Mammary epithelial cell (primary cell): ENCODE measurements at regions of chr13 and their contacts with region 1.

Region 1: DNA sequence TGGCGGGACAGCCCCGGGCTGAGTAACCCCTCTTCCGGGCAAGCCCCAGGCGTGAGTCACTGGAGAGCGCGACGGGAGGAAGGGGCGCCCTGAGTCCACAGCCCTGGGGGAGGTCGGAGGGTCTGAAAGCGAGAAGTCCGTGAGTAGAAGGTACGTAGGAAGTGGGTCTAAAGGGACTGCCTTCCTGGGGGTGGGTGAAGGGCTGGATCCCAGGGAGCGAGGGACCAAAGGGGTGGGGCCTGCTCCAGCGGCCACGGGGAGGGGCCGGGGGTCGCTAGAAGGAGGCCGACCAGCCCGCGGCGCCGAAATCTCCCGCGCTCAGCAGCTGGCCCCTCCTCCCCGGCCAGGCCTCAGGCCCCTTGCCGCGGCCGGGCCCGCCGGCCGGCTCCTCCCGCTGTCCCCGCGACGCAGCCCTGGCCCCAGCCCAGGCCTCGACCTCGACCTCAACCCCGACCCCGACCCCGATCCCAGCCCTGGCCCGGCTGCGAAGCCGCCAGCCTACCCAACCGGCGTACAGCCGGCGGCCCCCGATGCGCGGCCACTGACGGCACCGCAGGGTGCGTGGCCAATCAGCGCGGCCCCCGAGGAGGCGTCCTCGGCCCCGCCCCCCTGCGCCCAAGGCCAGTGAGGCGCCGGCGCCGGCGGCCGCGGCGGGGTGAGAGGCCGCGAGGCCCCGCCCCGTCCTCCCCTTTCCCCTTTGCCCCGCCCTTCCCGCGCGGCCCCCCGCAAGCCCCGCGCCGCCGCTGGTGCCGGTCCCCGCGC is 22.6 kb downstream of the IPO5 start:
- DNase-seq: peak; percentile 83
- H3K4me3 ChIP-seq: peak overlapping the region; percentile 70 to 98 (median 88)
- H3K27ac ChIP-seq: peak overlapping the region; percentile 80
- H3K4me1 ChIP-seq: peaks cover 13% of the 10 kb centered on the region
- H3K27me3 ChIP-seq: no peaks in the 10 kb centered on the region
- CTCF ChIP-seq: no peak

Region 2: GRCh38 chr13:97911311-97912128 is 64.5 kb before region 1 on chr13:
- CTCF ChIA-PET with region 1: no interaction called
- dilution Hi-C with region 1: no loop called
- in situ Hi-C with region 1: no loop called
- intact Hi-C with region 1: loop called (anchors 5 kb)
- DNase-seq: peak; percentile 29
- H3K4me3 ChIP-seq: no peak overlapping the region
- H3K27ac ChIP-seq: no peak overlapping the region
- H3K4me1 ChIP-seq: no peaks in the 10 kb centered on the region
- H3K27me3 ChIP-seq: no peaks in the 10 kb centered on the region
- CTCF ChIP-seq: peak; percentile 44 to 58

Region 3: GRCh38 chr13:97948041-97948440 is 28.0 kb before region 1 on chr13:
- CTCF ChIA-PET with region 1: no interaction called
- dilution Hi-C with region 1: no loop called
- in situ Hi-C with region 1: no loop called
- intact Hi-C with region 1: loop called (anchors 2 kb)
- DNase-seq: peak; percentile 52
- H3K4me3 ChIP-seq: no peak overlapping the region
- H3K27ac ChIP-seq: no peak overlapping the region
- H3K4me1 ChIP-seq: peaks cover 16% of the 10 kb centered on the region
- H3K27me3 ChIP-seq: no peaks in the 10 kb centered on the region
- CTCF ChIP-seq: no peak

Region 4: DNA sequence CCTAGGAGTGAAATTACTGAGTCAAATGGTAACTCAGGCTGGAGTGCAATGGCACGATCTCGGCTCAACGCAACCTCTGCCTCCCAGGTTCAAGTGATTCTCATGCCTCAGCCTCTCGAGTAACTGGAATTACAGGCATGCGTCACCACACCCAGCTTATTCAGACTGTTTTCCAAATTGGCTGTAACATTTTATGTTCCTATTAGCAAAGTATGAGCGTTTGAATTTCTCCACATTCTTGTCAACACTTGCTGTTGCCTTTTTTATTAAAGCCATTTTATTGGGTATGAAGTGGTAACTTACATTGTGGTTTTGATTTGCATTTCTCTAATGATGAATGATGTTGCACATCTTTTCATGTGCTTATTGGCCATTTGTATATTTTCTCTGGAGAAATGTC is 14.7 kb before region 1 on chr13:
- CTCF ChIA-PET with region 1: no interaction called
- dilution Hi-C with region 1: no loop called
- in situ Hi-C with region 1: no loop called
- intact Hi-C with region 1: no loop called
- DNase-seq: no peak
- H3K4me3 ChIP-seq: no peak overlapping the region
- H3K27ac ChIP-seq: no peak overlapping the region
- H3K4me1 ChIP-seq: no peaks in the 10 kb centered on the region
- H3K27me3 ChIP-seq: no peaks in the 10 kb centered on the region
- CTCF ChIP-seq: no peak

Region 5: DNA sequence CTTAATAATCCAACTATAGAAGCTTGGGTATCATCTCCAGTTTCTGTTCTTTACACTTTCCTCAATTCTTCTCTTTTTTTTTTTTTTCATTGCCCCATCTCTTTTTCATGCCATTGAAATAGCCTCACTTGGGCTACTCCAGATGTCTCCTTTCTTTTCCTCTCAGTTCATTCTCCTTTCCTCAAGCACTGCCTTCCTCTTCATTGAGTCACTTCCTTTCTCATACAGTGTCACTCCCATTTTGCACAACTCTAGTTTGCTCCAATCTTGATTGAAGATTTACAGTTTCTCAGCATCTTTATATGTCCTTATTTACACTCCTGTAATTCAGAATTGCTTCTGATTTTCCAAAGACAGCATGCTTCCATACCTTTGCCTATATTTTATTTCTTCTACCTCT is 38.7 kb after region 1 on chr13:
- CTCF ChIA-PET with region 1: no interaction called
- dilution Hi-C with region 1: no loop called
- in situ Hi-C with region 1: no loop called
- intact Hi-C with region 1: loop called (anchors 5 kb)
- DNase-seq: peak; percentile 50
- H3K4me3 ChIP-seq: no peak overlapping the region
- H3K27ac ChIP-seq: no peak overlapping the region
- H3K4me1 ChIP-seq: peaks cover 11% of the 10 kb centered on the region
- H3K27me3 ChIP-seq: no peaks in the 10 kb centered on the region
- CTCF ChIP-seq: no peak